Right ventricle myocardium superior (tissue), 1 donor: ENCODE measurements at regions of chr12 and their contacts with region 1.

Region 1: GRCh38 chr12:65602610-65603295 is 221.5 kb upstream of the HMGA2 start:
- DNase-seq: peak; percentile 75
- ATAC-seq: peak; percentile 97

Region 2: GRCh38 chr12:65986047-65986446 is 383.3 kb after region 1 on chr12:
- intact Hi-C with region 1: loop called (anchors 5 kb)
- DNase-seq: no peak
- ATAC-seq: no peak